Activated CD4-positive, alpha-beta memory T cell treated with anti-CD3 and anti-CD28 coated beads for 36 hours (primary cell): ENCODE measurements at regions of chr9 and their contacts with region 1.

Region 1: GRCh38 chr9:131270171-131271015 is 5.9 kb downstream of the FAM78A start:
- DNase-seq: peak; percentile 80
- H3K4me3 Mint-ChIP-seq: peak overlapping the region; percentile 99
- H3K27ac Mint-ChIP-seq: peak overlapping the region; percentile 97
- H3K4me1 Mint-ChIP-seq: peaks cover 56% of the 10 kb centered on the region
- H3K27me3 Mint-ChIP-seq: no peaks in the 10 kb centered on the region

Region 2: GRCh38 chr9:131125128-131126058 is 145.0 kb before region 1 on chr9 and contains the start of gene NUP214:
- CTCF ChIA-PET with region 1: no interaction called
- POLR2A ChIA-PET with region 1: interaction called, 5 read pairs
- intact Hi-C with region 1: loop called (anchors 5 kb)
- DNase-seq: peak; percentile 100
- H3K4me3 Mint-ChIP-seq: peak within 1 kb of the TSS; percentile 100
- H3K27ac Mint-ChIP-seq: peak within 1 kb of the TSS; percentile 96
- H3K4me1 Mint-ChIP-seq: peaks cover 29% of the 10 kb centered on the region
- H3K27me3 Mint-ChIP-seq: no peaks in the 10 kb centered on the region
- total RNA-seq, gene NUP214: 45.5 to 49.9 TPM

Region 3: GRCh38 chr9:131178382-131178781 is 92.0 kb before region 1 on chr9:
- CTCF ChIA-PET with region 1: interaction called, 6 read pairs
- POLR2A ChIA-PET with region 1: no interaction called
- intact Hi-C with region 1: loop called (anchors 5 kb)
- DNase-seq: peak; percentile 84
- H3K4me3 Mint-ChIP-seq: no peak overlapping the region
- H3K27ac Mint-ChIP-seq: no peak overlapping the region
- H3K4me1 Mint-ChIP-seq: peaks cover 5% of the 10 kb centered on the region
- H3K27me3 Mint-ChIP-seq: no peaks in the 10 kb centered on the region

Region 4: GRCh38 chr9:131237931-131238401 is 32.4 kb before region 1 on chr9:
- CTCF ChIA-PET with region 1: no interaction called
- POLR2A ChIA-PET with region 1: interaction called, 7 read pairs
- intact Hi-C with region 1: loop called (anchors 1 kb)
- DNase-seq: peak; percentile 93
- H3K4me3 Mint-ChIP-seq: peak overlapping the region; percentile 59
- H3K27ac Mint-ChIP-seq: peak overlapping the region; percentile 94
- H3K4me1 Mint-ChIP-seq: peaks cover 47% of the 10 kb centered on the region
- H3K27me3 Mint-ChIP-seq: no peaks in the 10 kb centered on the region

Region 5: DNA sequence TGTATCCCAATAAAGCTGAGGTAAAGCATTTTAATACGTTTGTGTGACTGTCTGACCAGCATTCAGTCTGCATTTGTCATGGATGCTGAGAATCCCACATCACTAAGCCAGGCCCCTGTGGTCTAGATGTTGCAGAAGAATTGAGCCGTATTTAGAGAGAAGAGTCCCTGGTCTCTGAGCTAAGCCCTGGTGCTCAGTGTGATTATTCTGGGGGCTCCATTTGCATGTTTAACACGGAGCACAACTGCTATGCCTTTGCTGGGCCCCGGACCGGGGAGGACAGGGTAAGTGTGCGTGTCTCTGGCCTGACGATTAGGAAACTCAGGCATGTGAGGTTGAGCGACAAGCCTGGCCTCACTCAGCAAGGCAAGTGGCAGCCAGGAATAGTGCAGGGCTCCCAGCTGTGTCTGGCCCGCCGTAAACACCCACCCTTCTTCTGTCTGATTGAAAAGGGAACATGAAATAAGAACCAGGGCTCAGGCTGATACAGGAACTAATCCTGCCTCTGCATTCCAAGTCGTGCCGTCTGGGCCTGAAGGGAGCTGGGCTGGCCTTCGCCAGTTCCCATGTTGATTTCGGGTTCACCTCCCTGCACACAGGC is 16.4 kb before region 1 on chr9:
- CTCF ChIA-PET with region 1: interaction called, 109 read pairs
- POLR2A ChIA-PET with region 1: interaction called, 180 read pairs
- intact Hi-C with region 1: loop called (anchors 1 kb)
- DNase-seq: no peak
- H3K4me3 Mint-ChIP-seq: peak overlapping the region; percentile 43
- H3K27ac Mint-ChIP-seq: peak overlapping the region; percentile 88
- H3K4me1 Mint-ChIP-seq: peaks cover 37% of the 10 kb centered on the region
- H3K27me3 Mint-ChIP-seq: no peaks in the 10 kb centered on the region

Region 6: GRCh38 chr9:131393622-131394463 is 123.5 kb after region 1 on chr9 and contains the start of gene PRRC2B:
- CTCF ChIA-PET with region 1: no interaction called
- POLR2A ChIA-PET with region 1: no interaction called
- intact Hi-C with region 1: loop called (anchors 5 kb)
- DNase-seq: peak; percentile 89
- H3K4me3 Mint-ChIP-seq: peak within 1 kb of the TSS; percentile 89
- H3K27ac Mint-ChIP-seq: peak within 1 kb of the TSS; percentile 95
- H3K4me1 Mint-ChIP-seq: peaks cover 43% of the 10 kb centered on the region
- H3K27me3 Mint-ChIP-seq: no peaks in the 10 kb centered on the region
- total RNA-seq, gene PRRC2B: 127 to 135 TPM